Activated naive CD4-positive, alpha-beta T cell treated with anti-CD3 and anti-CD28 coated beads for 36 hours (primary cell): ENCODE measurements at regions of chr1 and their contacts with region 1.

Region 1: DNA sequence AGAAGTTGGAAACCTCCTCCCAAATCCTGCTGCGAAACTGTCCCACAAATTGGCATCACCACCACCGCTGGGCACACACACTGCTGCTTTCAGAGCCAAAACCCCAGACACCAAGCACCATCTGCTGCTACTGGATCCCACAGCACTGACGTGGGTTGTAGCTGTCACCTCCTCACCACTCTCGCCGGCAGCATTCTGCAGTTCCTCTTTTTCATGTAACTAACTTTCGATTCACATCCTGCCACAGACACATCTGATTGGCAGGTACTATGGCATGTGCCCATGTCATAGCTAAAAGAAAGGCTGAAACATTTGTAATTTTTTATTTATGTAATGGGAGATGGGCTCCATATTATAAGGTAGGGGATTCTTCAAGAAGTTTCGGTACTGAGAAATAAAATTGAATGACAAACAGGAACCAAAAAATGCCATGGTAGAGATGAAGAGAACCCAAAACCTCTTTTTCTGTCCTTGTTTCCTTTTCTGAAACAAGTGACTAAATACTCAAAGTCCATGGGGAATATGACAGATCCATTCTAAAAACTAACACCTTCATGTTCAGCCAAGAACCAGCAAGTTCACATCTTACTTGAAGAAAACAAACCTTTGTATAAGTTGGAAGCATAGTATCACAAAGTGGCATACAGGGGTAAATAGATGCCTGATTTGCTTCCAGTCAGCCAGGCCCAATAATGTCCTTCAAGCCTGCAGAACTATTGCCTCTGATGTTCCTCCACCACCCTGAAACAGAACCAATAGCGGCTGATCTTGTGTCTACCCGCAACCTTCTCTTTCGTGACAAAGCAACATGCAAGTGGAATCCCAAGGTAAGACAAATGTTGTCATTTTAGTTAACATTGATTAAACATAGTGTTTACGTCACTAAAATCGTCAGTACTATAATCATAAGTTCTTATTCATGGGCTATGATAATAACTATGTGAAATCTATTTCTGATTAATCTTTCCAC is 26.6 kb upstream of the RGS13 start:
- DNase-seq: peak; percentile 79
- H3K4me3 Mint-ChIP-seq: peak overlapping the region; percentile 30
- H3K27ac Mint-ChIP-seq: no peak overlapping the region
- H3K4me1 Mint-ChIP-seq: peaks cover 14% of the 10 kb centered on the region
- H3K27me3 Mint-ChIP-seq: no peaks in the 10 kb centered on the region

Region 2: GRCh38 chr1:192477630-192478029 is 131.8 kb before region 1 on chr1:
- CTCF ChIA-PET with region 1: interaction called, 61 read pairs
- intact Hi-C with region 1: loop called (anchors 1 kb)
- DNase-seq: no peak
- H3K4me3 Mint-ChIP-seq: no peak overlapping the region
- H3K27ac Mint-ChIP-seq: no peak overlapping the region
- H3K4me1 Mint-ChIP-seq: no peaks in the 10 kb centered on the region
- H3K27me3 Mint-ChIP-seq: no peaks in the 10 kb centered on the region

Region 3: DNA sequence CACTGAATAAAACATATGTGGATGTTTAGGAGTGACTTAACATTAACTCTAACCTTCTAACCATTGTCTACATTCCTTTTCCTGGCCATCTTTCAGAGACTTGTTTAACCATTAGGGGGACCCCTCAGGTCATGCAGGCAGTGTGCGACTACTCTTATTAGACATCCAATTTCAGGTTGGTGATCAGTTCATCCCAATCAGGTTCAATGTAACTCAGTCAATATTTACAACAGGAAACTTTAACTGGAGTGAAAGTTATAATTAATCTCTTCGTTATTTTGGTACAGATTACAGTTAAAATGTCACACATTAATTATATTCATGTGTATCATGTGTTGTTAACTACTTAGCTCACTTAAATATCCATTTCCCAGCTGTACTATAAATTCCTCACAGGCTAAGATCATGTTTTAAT is 102.6 kb before region 1 on chr1:
- CTCF ChIA-PET with region 1: interaction called, 4 read pairs
- intact Hi-C with region 1: loop called (anchors 1 kb)
- DNase-seq: peak; percentile 21
- H3K4me3 Mint-ChIP-seq: no peak overlapping the region
- H3K27ac Mint-ChIP-seq: no peak overlapping the region
- H3K4me1 Mint-ChIP-seq: no peaks in the 10 kb centered on the region
- H3K27me3 Mint-ChIP-seq: no peaks in the 10 kb centered on the region

Region 4: DNA sequence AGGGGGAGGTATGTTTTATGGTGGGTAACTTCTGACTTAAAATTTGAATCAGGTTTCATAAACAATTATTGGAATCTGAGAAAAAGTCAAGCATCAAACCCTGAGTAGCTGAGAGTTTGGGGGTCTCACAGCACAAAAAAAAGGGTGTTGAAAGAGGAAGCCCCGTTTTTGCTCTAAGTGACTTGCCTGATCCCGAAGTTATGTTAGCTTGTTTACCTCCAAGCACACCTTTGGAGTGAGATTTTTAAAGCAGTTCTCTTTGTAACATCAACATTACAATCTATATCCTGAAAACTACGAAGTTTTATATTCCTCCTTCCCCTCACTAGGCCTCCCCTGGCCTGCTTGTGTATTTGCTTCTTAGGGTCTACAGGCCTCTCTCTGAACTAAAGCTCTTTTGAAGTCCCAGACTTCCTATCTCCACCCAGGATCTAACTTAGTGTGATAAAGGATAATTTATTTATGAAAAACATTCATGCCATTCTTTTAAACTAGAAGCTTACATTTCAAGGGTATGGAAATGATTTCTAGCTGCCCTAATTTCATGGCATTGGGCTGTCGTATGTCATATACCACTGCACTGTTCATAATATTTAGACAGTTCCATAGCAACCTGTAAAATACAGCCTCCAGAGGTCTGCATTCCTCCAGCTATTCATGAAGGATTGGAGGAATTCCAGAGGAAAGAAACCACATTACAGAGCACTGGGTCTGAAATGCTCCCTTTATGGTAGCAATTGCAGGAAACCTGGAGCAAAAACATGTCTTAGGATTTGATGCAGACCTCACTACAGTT is 69.9 kb before region 1 on chr1:
- CTCF ChIA-PET with region 1: no interaction called
- intact Hi-C with region 1: loop called (anchors 1 kb)
- DNase-seq: no peak
- H3K4me3 Mint-ChIP-seq: no peak overlapping the region
- H3K27ac Mint-ChIP-seq: peak overlapping the region; percentile 51
- H3K4me1 Mint-ChIP-seq: peaks cover 28% of the 10 kb centered on the region
- H3K27me3 Mint-ChIP-seq: no peaks in the 10 kb centered on the region

Region 5: GRCh38 chr1:192550922-192551534 is 58.4 kb before region 1 on chr1:
- CTCF ChIA-PET with region 1: no interaction called
- intact Hi-C with region 1: loop called (anchors 1 kb)
- DNase-seq: peak; percentile 34
- H3K4me3 Mint-ChIP-seq: no peak overlapping the region
- H3K27ac Mint-ChIP-seq: peak overlapping the region; percentile 53
- H3K4me1 Mint-ChIP-seq: peaks cover 29% of the 10 kb centered on the region
- H3K27me3 Mint-ChIP-seq: no peaks in the 10 kb centered on the region